ENCODE measurements at regions of chr6 and their contacts with region 1.

Region 1: GRCh38 chr6:6494677-6495076 is 93.8 kb upstream of the LY86 start:
- DNase-seq: peak; percentile 79
- ATAC-seq: peak; percentile 60

Region 2: DNA sequence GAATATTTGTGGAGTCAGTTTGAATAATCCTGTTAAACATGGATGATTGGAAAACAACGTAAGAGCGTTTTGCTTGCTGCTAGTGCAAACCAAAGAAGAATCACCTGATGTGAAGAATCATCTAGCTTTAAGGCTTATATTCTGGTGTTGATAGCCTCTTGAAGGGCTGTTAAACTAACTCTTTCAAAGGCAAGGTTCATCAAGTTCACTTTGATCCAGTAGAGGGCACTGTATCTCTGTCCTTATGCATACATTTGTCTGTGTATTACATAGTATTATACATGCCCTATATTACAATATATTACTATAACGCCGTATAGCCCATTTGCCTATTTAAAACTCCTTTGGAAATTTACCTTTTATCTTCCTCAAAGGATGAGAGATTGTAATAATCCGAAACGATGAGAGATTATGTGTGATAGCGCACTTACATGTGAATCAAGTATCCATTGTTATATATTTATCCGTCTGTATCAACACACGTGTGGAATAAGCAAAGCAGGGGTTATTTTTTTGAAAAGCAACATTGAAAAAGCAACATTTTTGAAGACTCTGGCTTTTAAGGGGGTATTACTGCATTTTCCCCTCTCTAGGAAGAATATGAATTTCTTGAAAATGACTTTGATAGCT is 437.1 kb before region 1 on chr6:
- intact Hi-C with region 1: loop called (anchors 2 kb)
- DNase-seq: no peak
- ATAC-seq: peak; percentile 48

Region 3: GRCh38 chr6:6221787-6222535 is 272.7 kb before region 1 on chr6:
- intact Hi-C with region 1: loop called (anchors 5 kb)
- DNase-seq: no peak
- ATAC-seq: no peak

Measured in Right ventricle myocardium inferior (tissue), 1 donor.